ENCODE measurements at regions of chr1 and their contacts with region 1.

Region 1: DNA sequence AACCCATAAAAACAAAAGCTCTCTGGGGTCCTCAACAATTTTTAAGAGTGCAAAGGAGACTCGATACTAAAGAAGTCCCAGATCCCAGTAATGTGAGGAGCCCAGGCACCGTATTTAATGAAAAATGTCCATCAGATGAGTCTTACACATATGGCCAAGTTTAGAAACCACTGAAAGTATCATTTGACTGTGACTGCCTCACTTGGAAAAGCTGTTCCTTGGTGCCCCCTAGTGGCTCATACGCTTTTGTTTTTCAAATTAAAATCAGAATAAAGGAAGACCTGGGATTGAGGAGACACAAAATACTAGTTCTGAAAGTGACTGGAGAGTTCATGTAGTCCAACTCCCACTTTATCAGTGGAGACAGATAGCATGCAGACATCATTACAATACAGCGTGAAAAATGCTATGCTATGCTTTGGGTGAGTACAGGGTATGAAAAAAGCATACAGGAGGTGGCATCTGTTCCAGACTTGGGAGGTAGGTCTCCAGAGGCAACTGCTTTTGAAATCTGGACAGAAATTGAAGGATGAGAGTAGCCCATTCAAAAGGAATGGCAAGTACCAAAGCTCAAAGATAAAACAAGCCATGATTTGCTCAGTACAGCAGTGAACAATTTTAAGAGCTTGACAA is 33.8 kb downstream of the GDAP2 start:
- DNase-seq: peak; percentile 52
- CTCF ChIP-seq: peak; percentile 72

Region 2: GRCh38 chr1:117512743-117513321 is 382.8 kb before region 1 on chr1:
- in situ Hi-C with region 1: loop called (anchors 25 kb)
- DNase-seq: no peak
- CTCF ChIP-seq: peak; percentile 51

Region 3: GRCh38 chr1:117710710-117711109 is 184.9 kb before region 1 on chr1:
- in situ Hi-C with region 1: no loop called
- DNase-seq: no peak
- CTCF ChIP-seq: peak; percentile 33

Region 4: GRCh38 chr1:117735045-117735992 is 160.3 kb before region 1 on chr1:
- in situ Hi-C with region 1: no loop called
- DNase-seq: peak; percentile 43
- CTCF ChIP-seq: no peak

Measured in GM13977 (cell line).